PC-9 (cell line): ENCODE measurements at regions of chr4 and their contacts with region 1.

Region 1: DNA sequence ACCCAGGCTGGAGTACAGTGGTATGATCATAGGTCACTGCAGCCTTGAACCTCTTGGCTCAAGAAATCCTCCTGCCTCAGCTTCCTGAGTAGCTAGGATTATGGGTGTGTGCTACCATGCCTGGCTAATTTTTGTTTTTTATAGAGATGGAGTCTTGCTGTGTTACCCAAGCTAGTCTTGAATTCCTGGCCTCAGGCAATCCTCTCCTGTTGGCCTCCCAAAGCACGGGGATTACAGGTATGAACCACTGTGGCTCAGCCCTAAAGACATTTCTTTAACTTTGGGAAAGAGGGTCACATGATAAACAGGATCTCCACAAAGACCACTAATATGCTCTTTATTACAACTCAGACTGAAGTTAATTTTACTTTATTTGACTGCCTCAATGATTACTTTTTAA is 199.1 kb downstream of the NR3C2 start:
- DNase-seq: no peak
- H3K4me3 ChIP-seq: no peak overlapping the region
- H3K27ac ChIP-seq: no peak overlapping the region
- H3K4me1 ChIP-seq: no peaks in the 10 kb centered on the region
- H3K27me3 ChIP-seq: no peaks in the 10 kb centered on the region
- CTCF ChIP-seq: no peak

Region 2: GRCh38 chr4:149136951-149137620 is 894.0 kb after region 1 on chr4:
- CTCF ChIA-PET with region 1: no interaction called
- POLR2A ChIA-PET with region 1: interaction called, 28 read pairs
- intact Hi-C with region 1: no loop called
- DNase-seq: no peak
- H3K4me3 ChIP-seq: no peak overlapping the region
- H3K27ac ChIP-seq: no peak overlapping the region
- H3K4me1 ChIP-seq: no peaks in the 10 kb centered on the region
- H3K27me3 ChIP-seq: no peaks in the 10 kb centered on the region
- CTCF ChIP-seq: no peak